ENCODE measurements at regions of chr11 and their contacts with region 1.

Region 1: DNA sequence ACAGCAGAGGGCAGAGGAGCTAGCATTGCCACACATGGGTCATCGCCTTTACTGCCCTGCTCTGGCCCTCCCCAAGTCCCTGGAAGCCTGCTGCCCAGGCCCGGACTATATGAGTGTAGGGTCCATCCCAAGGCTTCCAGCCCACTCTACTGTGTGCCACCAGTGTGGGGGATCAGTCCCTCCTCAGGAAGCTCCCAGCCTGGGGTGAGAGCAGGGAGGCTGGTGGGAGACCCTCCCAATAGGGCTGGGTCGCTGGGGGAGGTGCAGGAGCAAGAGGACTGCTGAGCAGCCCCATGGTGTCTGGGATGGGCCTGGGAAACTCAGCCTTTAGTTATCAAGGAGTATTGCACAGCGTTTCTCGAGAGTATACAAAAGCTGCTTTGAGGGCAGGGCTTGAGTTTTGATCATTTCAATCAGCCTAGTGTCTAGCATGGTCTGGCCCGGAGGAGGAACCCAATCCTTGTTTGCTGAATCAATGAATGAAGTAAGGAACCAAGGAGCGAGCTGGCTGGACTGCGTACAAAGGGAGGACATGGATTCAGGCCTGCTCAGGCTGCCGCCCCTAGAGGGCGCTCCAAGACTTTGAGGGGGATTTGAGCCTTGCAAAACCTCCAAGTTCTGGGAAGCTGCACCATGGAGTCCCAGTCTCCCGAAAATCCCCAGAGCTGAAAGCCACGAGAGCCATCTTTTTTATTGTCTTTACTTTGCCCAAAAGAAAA is 89.0 kb upstream of the PARVA start:
- DNase-seq: peak; percentile 67
- ATAC-seq: peak; percentile 62
- H3K4me3 Mint-ChIP-seq: no peak overlapping the region
- H3K27ac Mint-ChIP-seq: no peak overlapping the region
- H3K4me1 Mint-ChIP-seq: peaks cover 17% of the 10 kb centered on the region
- H3K27me3 Mint-ChIP-seq: no peaks in the 10 kb centered on the region

Region 2: GRCh38 chr11:12061851-12062560 is 226.4 kb before region 1 on chr11:
- CTCF ChIA-PET with region 1: interaction called, 10 read pairs
- DNase-seq: peak; percentile 42
- ATAC-seq: peak; percentile 49
- H3K4me3 Mint-ChIP-seq: no peak overlapping the region
- H3K27ac Mint-ChIP-seq: peak overlapping the region; percentile 11
- H3K4me1 Mint-ChIP-seq: peaks cover 10% of the 10 kb centered on the region
- H3K27me3 Mint-ChIP-seq: no peaks in the 10 kb centered on the region

Region 3: GRCh38 chr11:12301379-12301778 is 13.0 kb after region 1 on chr11:
- CTCF ChIA-PET with region 1: interaction called, 10 read pairs
- DNase-seq: no peak
- ATAC-seq: no peak
- H3K4me3 Mint-ChIP-seq: no peak overlapping the region
- H3K27ac Mint-ChIP-seq: no peak overlapping the region
- H3K4me1 Mint-ChIP-seq: no peaks in the 10 kb centered on the region
- H3K27me3 Mint-ChIP-seq: no peaks in the 10 kb centered on the region

Region 4: DNA sequence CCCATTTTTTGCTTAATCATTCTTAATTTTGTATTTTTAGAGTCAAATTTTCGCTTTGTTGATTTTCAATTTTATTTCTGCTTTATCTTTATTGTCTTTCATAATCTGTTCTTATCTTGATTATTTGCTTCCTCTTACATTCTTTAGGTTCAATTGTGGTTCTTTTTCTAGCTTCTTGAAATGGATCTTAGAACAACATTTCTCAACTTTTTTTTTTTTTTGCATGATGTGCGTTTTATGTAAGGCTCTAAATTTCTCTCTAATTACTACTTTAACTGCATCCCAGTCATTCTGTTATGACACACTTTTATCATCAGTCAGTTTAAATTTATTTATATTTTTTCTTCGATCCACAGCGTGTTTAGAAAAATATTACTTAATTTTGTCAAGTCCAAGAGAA is 23.8 kb after region 1 on chr11:
- CTCF ChIA-PET with region 1: interaction called, 12 read pairs
- DNase-seq: no peak
- ATAC-seq: no peak
- H3K4me3 Mint-ChIP-seq: no peak overlapping the region
- H3K27ac Mint-ChIP-seq: no peak overlapping the region
- H3K4me1 Mint-ChIP-seq: no peaks in the 10 kb centered on the region
- H3K27me3 Mint-ChIP-seq: no peaks in the 10 kb centered on the region

Region 5: DNA sequence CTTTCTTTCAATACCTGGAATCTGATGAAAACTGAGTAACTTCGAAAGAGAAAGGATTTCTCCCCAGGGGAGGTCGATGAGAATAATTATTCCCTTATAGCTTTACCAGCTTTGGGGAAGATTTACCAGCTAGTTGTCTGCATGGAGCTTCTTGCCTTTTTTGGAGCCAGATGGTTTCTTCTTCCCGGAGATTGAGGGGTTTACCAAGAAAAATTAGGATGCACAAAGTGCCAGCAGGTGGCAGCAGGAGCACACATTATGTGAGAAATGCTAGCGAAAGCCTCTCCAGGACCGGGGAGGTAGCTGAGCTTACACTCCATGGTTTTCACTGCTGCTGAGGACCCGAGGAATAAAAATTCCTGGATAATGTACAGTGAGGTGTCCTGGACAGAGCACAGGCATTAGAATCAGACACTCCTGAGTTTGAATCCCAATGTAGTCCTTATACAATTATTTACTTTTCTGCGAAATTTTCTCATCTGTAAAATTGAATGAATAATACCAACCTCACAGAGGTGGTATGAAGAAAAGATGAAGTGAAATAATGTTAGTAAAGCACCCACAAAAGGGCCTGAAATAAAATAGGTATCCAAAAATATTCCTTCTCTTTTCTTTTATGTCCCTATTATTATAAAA is 43.0 kb after region 1 on chr11:
- CTCF ChIA-PET with region 1: interaction called, 13 read pairs
- DNase-seq: peak; percentile 78
- ATAC-seq: no peak
- H3K4me3 Mint-ChIP-seq: no peak overlapping the region
- H3K27ac Mint-ChIP-seq: no peak overlapping the region
- H3K4me1 Mint-ChIP-seq: peaks cover 4% of the 10 kb centered on the region
- H3K27me3 Mint-ChIP-seq: no peaks in the 10 kb centered on the region

Measured in activated CD8-positive, alpha-beta memory T cell treated with anti-CD3 and anti-CD28 coated beads, Interleukin-2, amount 10 ng/mL, durations not matched to agents 7 days and 5 days (primary cell).